Activated CD8-positive, alpha-beta T cell treated with anti-CD3 and anti-CD28 coated beads for 36 hours (primary cell): ENCODE measurements at regions of chr13 and their contacts with region 1.

Region 1: DNA sequence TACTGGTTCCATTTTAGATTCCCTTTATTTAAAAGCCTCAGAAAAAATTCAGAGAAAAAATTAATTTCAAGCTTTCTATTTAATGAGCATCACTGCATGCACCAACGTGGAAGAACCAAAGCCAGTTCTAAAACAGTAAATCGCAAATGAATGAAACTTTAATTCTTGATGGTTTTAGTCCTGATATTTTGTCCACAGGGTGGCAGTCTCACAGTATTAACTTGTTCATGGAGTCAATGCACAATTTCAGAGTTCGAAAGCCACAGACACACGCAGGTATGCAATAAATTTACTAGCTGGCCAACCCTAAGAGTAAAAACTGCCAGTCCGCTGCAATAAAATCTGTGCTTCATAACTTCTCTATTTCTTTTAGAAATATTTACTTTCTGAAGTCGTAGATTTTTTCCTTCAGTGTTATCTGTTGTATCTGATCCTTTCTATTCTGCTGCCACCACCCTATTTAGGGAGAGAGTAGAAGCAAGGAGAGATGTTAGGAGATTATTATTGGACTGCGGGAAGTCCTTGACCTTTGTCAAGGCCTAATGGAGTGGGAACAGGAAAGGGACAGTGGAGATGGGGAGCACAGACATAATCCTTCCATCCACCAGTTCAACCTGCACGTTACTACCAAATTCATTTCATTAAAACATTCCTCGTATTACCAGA is 7.0 kb upstream of the WBP4 start:
- DNase-seq: peak; percentile 60
- ATAC-seq: peak; percentile 54
- H3K4me3 Mint-ChIP-seq: peak overlapping the region; percentile 6
- H3K27ac Mint-ChIP-seq: no peak overlapping the region
- H3K4me1 Mint-ChIP-seq: peaks cover 57% of the 10 kb centered on the region
- H3K27me3 Mint-ChIP-seq: no peaks in the 10 kb centered on the region
- CTCF ChIP-seq: peak; percentile 76

Region 2: GRCh38 chr13:40974460-40975407 is 79.6 kb before region 1 on chr13:
- CTCF ChIA-PET with region 1: interaction called, 37 read pairs
- POLR2A ChIA-PET with region 1: interaction called, 16 read pairs
- intact Hi-C with region 1: no loop called
- DNase-seq: peak; percentile 53
- ATAC-seq: peak; percentile 86
- H3K4me3 Mint-ChIP-seq: peak overlapping the region; percentile 49
- H3K27ac Mint-ChIP-seq: peak overlapping the region; percentile 83
- H3K4me1 Mint-ChIP-seq: peaks cover 87% of the 10 kb centered on the region
- H3K27me3 Mint-ChIP-seq: no peaks in the 10 kb centered on the region
- CTCF ChIP-seq: peak; percentile 54

Region 3: DNA sequence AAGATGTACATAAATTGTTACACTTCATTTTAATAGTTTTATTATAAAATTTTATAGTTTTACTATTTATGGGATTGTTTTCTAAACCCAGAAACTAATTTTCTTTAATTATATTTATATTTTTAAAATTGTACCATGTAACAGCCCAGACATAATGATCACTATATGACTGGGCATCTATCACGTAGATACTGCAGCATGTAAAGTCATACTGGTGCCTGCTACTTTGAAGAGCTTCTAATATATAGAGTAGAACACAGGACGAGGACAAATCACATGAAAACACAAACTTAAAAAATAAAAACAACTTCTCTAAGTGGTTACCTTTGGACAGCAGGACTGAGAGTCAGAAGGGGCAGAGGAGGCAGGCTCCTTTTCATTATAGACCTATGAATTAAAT is 40.5 kb before region 1 on chr13:
- CTCF ChIA-PET with region 1: interaction called, 31 read pairs
- POLR2A ChIA-PET with region 1: interaction called, 38 read pairs
- intact Hi-C with region 1: no loop called
- DNase-seq: no peak
- ATAC-seq: peak; percentile 68
- H3K4me3 Mint-ChIP-seq: peak overlapping the region; percentile 91
- H3K27ac Mint-ChIP-seq: peak overlapping the region; percentile 86
- H3K4me1 Mint-ChIP-seq: peaks cover 45% of the 10 kb centered on the region
- H3K27me3 Mint-ChIP-seq: no peaks in the 10 kb centered on the region
- CTCF ChIP-seq: no peak

Region 4: DNA sequence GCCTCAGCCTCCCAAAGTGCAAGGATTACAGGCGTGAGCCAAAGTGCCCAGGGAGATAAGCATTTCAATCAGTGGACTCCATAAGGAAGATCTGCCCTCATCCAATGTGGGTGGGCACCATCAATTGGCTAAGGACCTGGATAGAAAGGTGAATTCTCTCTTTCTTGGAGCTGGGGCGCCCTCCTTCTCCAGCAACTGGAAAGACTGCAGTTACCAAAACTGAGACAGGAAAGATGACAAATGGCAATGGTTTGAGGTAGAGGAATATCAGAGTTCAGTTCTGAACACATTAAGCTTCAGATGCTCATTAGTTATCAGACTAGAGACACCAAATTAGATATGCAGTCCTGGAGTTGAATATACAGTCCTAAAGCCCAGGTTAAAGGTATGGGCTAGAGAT is 24.7 kb before region 1 on chr13:
- CTCF ChIA-PET with region 1: interaction called, 28 read pairs
- POLR2A ChIA-PET with region 1: interaction called, 3 read pairs
- intact Hi-C with region 1: no loop called
- DNase-seq: peak; percentile 35
- ATAC-seq: peak; percentile 28
- H3K4me3 Mint-ChIP-seq: no peak overlapping the region
- H3K27ac Mint-ChIP-seq: no peak overlapping the region
- H3K4me1 Mint-ChIP-seq: peaks cover 33% of the 10 kb centered on the region
- H3K27me3 Mint-ChIP-seq: no peaks in the 10 kb centered on the region
- CTCF ChIP-seq: no peak

Region 5: DNA sequence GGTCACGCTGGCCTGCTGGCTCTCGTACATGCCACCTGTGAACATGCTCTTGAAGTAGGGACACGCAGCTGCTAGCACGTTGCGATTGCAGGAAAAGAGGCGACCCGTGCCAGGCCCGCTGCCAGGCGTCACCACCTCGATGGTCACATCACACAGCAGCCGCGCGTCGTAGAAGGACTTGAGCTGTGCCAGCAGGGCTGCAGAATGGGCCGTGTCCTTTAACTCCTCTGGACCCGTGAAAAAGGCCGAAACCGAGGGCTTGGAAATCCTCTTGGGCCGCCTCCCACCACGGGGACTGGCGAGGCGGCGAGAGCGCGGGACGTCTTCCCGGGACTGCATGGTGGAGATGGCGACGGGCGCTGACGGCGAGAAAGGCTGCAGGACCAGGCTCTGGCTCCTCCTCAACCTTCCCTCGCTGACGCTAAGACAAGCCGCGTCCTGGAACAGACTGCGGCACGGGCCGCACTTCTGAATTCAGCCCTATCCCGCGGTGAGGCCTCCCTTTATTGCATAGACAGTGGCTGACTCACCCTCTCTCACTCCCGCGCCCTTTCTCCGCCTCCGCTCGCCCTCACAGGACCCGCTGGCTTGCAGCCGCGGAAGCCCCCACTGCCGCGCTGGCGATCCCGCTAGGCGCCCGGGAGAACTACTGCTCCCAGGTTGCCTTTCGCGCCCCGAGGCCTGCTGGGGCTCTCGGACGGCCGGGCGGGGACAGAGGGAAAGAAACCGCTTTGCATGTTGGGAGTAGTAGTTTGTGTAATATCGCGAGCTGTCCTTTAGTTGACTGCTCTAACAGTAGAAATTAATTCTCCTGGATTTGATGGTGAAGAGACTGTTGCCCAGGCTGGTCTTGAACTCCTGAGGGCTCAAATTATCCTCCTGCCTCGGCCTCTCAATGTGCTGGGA is 139.8 kb after region 1 on chr13 and contains the start of gene KBTBD7:
- CTCF ChIA-PET with region 1: interaction called, 8 read pairs
- POLR2A ChIA-PET with region 1: no interaction called
- intact Hi-C with region 1: loop called (anchors 10 kb)
- DNase-seq: peak; percentile 97
- ATAC-seq: peak; percentile 97
- H3K4me3 Mint-ChIP-seq: peak within 1 kb of the TSS; percentile 85
- H3K27ac Mint-ChIP-seq: peak within 1 kb of the TSS; percentile 98
- H3K4me1 Mint-ChIP-seq: peaks cover 35% of the 10 kb centered on the region
- H3K27me3 Mint-ChIP-seq: no peaks in the 10 kb centered on the region
- CTCF ChIP-seq: no peak
- total RNA-seq, gene KBTBD7: 2.3 to 2.5 TPM